ENCODE measurements at regions of chrX and their contacts with region 1.

Region 1: DNA sequence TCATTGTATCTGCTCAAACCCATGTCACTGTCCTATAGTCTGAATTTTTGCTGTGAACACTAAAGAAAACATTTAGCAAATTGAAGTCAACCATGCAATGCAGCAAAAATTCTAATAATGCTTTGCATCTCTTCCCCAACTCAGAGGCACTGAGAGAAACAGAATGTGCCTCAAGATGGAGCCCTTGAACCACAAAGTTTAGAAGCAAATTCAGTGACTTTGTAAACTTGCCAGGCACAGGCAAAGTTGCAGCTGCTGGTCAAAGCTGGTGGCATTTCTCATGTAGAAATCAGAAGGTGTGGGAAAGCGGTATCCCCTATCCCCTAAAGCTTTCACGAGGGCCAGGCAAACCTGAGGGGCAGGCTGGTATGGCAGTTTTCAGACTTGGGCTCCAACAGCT is 121.7 kb upstream of the DIPK2B start:
- DNase-seq: peak; percentile 37
- ATAC-seq: no peak
- H3K4me3 ChIP-seq: no peak overlapping the region
- H3K27ac ChIP-seq: no peak overlapping the region
- H3K4me1 ChIP-seq: no peaks in the 10 kb centered on the region
- H3K27me3 ChIP-seq: no peaks in the 10 kb centered on the region
- CTCF ChIP-seq: peak; percentile 60
- EP300 ChIP-seq: no peak
- POLR2A ChIP-seq: no peak
- RAD21 ChIP-seq: no peak

Region 2: DNA sequence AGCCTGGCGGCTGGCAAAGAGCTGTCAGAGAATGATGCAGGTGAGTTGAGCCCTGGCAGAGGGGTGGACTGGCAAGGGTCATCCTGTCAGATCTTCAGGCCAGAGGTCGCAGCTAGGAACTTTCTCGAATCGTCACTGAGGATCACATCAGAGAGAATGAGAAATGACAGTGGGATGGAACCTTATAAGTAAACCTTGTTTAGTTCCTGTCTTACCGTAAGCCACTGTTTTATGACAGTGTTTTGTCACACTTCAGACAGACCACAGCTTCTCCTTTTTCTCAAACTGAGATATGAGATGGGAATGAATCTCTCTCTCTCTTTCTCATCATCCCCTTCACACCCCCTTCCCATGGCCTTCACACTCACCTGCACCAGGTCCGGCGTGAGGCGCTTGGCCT is 131.0 kb before region 1 on chrX:
- CTCF ChIA-PET with region 1: no interaction called
- POLR2A ChIA-PET with region 1: no interaction called
- in situ Hi-C with region 1: no loop called
- intact Hi-C with region 1: no loop called
- DNase-seq: no peak
- ATAC-seq: no peak
- H3K4me3 ChIP-seq: no peak overlapping the region
- H3K27ac ChIP-seq: no peak overlapping the region
- H3K4me1 ChIP-seq: no peaks in the 10 kb centered on the region
- H3K27me3 ChIP-seq: no peaks in the 10 kb centered on the region
- CTCF ChIP-seq: no peak
- EP300 ChIP-seq: no peak
- POLR2A ChIP-seq: no peak
- RAD21 ChIP-seq: no peak

Region 3: DNA sequence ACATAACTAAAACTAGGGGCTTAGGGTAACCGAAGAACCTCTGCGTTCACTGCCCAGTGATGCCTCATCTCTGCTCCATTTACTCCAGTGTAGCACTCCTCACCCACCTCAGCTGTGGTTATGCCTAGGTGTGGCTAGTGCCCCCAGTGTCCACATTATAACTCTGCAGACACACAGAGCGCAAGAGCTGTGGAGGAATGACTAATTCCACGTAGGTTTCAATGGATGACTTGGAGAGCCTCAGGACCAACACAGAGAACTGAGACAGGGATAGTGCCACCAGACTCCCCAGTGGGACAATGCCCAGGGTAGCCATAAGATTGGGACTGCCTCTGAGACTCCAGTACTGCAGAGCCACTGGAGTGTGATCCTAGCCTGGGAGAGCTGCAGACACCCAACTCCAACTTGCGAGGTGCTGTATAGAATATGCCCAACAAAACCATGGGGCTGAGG is 420.7 kb after region 1 on chrX:
- CTCF ChIA-PET with region 1: no interaction called
- POLR2A ChIA-PET with region 1: no interaction called
- in situ Hi-C with region 1: loop called (anchors 25 kb)
- intact Hi-C with region 1: no loop called
- DNase-seq: peak; percentile 12
- ATAC-seq: peak; percentile 90
- H3K4me3 ChIP-seq: no peak overlapping the region
- H3K27ac ChIP-seq: no peak overlapping the region
- H3K4me1 ChIP-seq: no peaks in the 10 kb centered on the region
- H3K27me3 ChIP-seq: no peaks in the 10 kb centered on the region
- CTCF ChIP-seq: peak; percentile 31; the same call in 1 of the 2 replicates
- EP300 ChIP-seq: no peak
- POLR2A ChIP-seq: no peak
- RAD21 ChIP-seq: no peak

Region 4: DNA sequence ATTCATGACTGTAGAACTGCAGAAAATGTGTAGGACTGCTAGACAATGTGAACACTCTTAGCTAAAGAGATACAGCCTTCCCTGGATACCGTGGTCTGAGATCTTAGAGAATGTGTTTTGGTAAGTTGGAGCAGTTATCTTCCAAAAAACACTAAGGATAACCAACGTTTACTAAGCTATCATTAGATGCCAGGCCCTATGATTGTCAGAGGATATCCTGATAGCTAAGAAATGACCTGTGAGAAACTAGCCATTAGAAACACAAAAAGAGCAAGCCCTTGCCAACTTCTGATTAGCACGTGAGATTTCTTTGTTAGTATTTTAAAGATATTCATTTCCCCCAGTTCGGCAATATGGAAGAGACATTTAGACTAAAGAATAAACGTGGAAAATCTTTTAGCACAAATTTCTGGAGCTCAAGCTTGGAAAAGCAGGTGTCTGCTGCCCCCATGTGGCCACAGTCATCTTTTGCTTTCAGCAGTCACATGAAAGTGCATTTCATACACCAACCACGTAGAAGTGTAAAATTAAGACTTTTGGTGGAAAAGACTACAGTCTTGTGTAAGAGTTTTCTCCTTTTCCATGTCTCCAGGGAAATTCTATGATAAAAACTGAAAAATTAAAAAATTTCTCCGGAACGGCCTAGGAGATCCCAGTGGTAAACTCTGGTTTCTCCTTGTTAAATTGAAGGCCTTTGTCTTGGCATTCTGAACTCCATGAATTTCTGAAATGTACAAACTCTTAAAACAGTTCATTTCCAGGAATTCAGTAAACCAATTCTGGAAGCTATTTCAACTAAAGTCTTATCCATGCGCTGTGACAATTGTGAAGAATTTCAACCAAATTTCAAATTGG is 1086.4 kb after region 1 on chrX:
- CTCF ChIA-PET with region 1: no interaction called
- POLR2A ChIA-PET with region 1: no interaction called
- in situ Hi-C with region 1: no loop called
- intact Hi-C with region 1: loop called (anchors 5 kb)
- DNase-seq: peak; percentile 18
- ATAC-seq: no peak
- H3K4me3 ChIP-seq: no peak overlapping the region
- H3K27ac ChIP-seq: no peak overlapping the region
- H3K4me1 ChIP-seq: no peaks in the 10 kb centered on the region
- H3K27me3 ChIP-seq: no peaks in the 10 kb centered on the region; a peak in 1 of 5 replicates
- CTCF ChIP-seq: peak; percentile 75
- EP300 ChIP-seq: no peak
- POLR2A ChIP-seq: no peak
- RAD21 ChIP-seq: peak; percentile 68; the same call in 1 of the 2 replicates

Measured in HepG2 (cell line).